ENCODE measurements at regions of chr19 and their contacts with region 1.

Region 1: DNA sequence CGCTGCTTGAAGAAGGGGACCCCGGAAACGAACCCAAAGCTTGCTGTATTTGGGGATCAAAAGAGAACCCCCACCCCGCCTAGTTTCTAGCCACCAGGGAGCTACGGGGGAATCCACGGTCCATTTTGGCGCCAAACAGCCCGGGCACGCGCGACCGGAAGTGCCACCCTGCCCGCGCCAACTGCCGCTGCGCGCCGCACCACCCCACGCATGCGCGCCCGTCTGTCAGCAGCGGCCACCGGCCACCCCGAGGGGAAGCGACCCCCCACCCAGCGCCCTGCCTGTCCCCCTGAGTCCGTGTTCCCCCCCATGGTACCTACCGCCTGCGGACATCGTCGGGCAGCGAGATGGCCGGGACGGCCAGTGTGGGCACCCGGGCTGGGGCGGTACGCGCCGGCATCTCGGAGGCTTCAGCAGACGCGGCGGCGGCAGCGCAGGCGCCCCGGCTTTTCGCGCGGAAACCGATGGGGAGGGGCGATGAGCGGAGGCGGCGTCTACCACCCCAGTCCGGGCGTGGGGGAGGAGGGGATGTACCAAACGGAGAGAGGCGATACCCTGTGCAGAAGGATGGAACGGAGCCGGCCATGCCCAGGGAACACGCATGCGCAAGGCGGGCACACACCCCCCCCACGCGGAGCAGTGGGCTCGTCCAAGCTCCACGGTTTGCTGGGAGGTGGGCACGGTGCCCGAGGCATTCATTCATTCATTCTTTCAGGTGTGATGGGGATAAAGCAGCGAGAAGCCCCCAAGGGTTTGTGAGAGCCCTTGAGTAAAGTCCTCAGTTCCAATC is at the start of gene DNMT1:
- DNase-seq: peak; percentile 99
- ATAC-seq: peak; percentile 94
- H3K4me3 Mint-ChIP-seq: peak within 1 kb of the TSS; percentile 89
- H3K27ac Mint-ChIP-seq: peak within 1 kb of the TSS; percentile 97
- H3K4me1 Mint-ChIP-seq: peaks cover 49% of the 10 kb centered on the region
- H3K27me3 Mint-ChIP-seq: no peaks in the 10 kb centered on the region
- total RNA-seq, gene DNMT1: 374 to 385 TPM

Region 2: DNA sequence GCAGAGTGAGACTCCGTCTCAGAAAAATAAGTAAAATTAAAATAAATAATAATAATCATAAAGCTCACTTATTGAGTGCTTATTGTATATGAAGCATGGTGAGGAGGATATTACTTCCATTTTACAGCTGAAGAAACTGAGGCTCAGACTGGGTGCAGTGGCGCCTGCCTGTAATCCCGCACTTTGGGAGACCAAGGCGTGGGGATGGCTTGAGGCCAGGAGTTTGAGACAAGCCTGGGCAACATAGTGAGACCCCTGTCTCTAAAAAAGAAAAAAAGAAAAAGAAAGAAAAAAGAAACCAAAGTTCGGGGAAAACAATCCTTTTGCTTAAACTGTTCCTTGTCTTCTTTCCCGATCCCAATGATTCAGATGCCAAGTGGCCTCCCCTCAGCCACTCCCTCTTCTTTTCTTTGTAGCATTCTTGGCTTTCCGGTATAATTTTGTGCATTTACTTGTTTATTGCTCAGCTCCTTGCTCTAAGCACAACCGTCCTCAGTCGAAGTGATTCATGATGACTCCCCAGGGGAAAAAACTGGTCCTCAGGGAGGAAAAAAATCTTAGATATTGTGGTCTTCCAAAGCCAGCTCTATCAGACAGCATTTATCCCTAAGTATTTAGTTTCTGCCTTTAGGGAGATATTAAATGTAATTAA is 74.0 kb before region 1 on chr19:
- CTCF ChIA-PET with region 1: no interaction called
- POLR2A ChIA-PET with region 1: no interaction called
- intact Hi-C with region 1: loop called in 1 of 2 experiments (anchors 2 kb)
- DNase-seq: no peak
- ATAC-seq: no peak
- H3K4me3 Mint-ChIP-seq: no peak overlapping the region
- H3K27ac Mint-ChIP-seq: no peak overlapping the region
- H3K4me1 Mint-ChIP-seq: peaks cover 15% of the 10 kb centered on the region
- H3K27me3 Mint-ChIP-seq: no peaks in the 10 kb centered on the region

Region 3: GRCh38 chr19:10230861-10231611 is 36.3 kb after region 1 on chr19 and contains the start of gene S1PR2:
- CTCF ChIA-PET with region 1: interaction called, 3 read pairs
- POLR2A ChIA-PET with region 1: no interaction called
- intact Hi-C with region 1: loop called (anchors 1 to 2 kb)
- DNase-seq: peak; percentile 83
- ATAC-seq: peak; percentile 62
- H3K4me3 Mint-ChIP-seq: peak within 1 kb of the TSS; percentile 81
- H3K27ac Mint-ChIP-seq: peak within 1 kb of the TSS; percentile 84
- H3K4me1 Mint-ChIP-seq: peaks cover 24% of the 10 kb centered on the region
- H3K27me3 Mint-ChIP-seq: no peaks in the 10 kb centered on the region
- total RNA-seq, gene S1PR2: 8.1 to 9.0 TPM

Region 4: DNA sequence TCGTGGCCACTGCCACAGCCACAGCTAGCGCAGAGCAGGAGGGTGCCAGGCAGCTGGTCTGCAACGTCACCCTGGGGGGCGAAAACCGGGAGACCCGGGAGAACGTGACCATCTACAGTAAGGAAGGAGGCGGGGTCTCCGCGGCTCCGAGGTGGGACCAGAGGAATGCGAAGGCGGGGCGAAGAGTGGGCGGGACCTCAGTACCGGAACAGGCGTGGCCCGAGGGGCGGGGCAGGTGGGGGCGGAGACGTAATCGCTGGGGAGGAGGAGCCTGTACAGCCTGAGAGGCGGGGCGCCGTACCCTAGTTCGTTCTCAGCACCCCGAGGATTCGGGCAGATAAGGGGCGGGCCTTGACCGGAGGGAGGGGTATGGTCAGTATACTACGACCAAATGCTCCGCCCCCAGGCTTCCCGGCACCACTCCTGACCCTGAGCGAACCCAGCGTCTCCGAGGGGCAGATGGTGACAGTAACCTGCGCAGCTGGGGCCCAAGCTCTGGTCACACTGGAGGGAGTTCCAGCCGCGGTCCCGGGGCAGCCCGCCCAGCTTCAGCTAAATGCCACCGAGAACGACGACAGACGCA is 97.6 kb after region 1 on chr19:
- CTCF ChIA-PET with region 1: no interaction called
- POLR2A ChIA-PET with region 1: no interaction called
- intact Hi-C with region 1: loop called in 1 of 2 experiments (anchors 1 kb)
- DNase-seq: peak; percentile 92
- ATAC-seq: peak; percentile 63
- H3K4me3 Mint-ChIP-seq: peak overlapping the region; percentile 66
- H3K27ac Mint-ChIP-seq: no peak overlapping the region
- H3K4me1 Mint-ChIP-seq: peaks cover 59% of the 10 kb centered on the region
- H3K27me3 Mint-ChIP-seq: peaks cover 70% of the 10 kb centered on the region

Region 5: GRCh38 chr19:10461047-10461790 is 266.5 kb after region 1 on chr19:
- CTCF ChIA-PET with region 1: no interaction called
- POLR2A ChIA-PET with region 1: interaction called, 10 read pairs
- intact Hi-C with region 1: no loop called
- DNase-seq: peak; percentile 98
- ATAC-seq: peak; percentile 98
- H3K4me3 Mint-ChIP-seq: peak overlapping the region; percentile 43
- H3K27ac Mint-ChIP-seq: no peak overlapping the region
- H3K4me1 Mint-ChIP-seq: peaks cover 9% of the 10 kb centered on the region
- H3K27me3 Mint-ChIP-seq: peaks cover 3% of the 10 kb centered on the region

Measured in activated CD4-positive, alpha-beta T cell treated with anti-CD3 and anti-CD28 coated beads for 36 hours (primary cell).